GM12878 (cell line): ENCODE measurements at regions of chr9 and their contacts with region 1.

Region 1: DNA sequence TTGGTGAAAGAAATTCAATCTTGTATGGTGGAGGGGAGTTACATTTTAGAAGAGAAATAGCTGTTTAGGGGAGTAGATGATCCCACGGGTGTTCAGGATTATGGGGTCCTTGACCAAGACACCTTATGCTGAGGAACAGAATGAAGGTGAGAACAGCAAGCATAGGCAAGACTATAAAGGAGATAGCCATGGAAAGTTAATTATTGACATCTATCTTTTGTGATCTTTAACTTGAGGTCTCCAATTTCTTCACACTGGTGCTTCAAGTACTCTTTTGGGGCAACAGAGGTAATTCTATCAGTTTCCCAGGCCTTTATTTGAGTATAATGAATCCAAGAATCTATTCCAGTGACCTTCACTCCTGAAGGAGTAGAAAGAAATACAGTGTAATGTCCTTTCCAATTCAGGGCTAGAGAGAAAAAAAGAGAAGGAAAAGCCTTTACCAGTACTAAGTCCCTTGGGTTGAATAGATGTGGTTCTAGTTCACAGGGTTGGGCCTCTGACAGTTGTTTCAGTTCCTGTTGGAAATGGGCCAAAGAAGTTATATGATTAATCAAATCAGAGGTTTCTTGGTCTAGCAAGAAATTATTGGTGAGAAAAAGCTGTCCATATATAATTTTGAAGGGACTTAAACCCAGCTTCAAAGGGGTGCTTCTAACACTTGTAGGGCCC is 2104.1 kb upstream of the ACO1 start:
- DNase-seq: no peak
- ATAC-seq: peak; percentile 89
- H3K4me3 ChIP-seq: no peak overlapping the region
- H3K27ac ChIP-seq: no peak overlapping the region
- H3K4me1 ChIP-seq: no peaks in the 10 kb centered on the region
- H3K27me3 ChIP-seq: no peaks in the 10 kb centered on the region
- CTCF ChIP-seq: no peak
- EP300 ChIP-seq: no peak
- POLR2A ChIP-seq: no peak
- RAD21 ChIP-seq: no peak

Region 2: GRCh38 chr9:30120654-30121053 is 159.7 kb before region 1 on chr9:
- CTCF ChIA-PET with region 1: no interaction called
- POLR2A ChIA-PET with region 1: no interaction called
- RAD21 ChIA-PET with region 1: no interaction called
- SMC1A ChIA-PET with region 1: no interaction called
- in situ Hi-C with region 1: no loop called
- intact Hi-C with region 1: no loop called
- DNase-seq: no peak
- ATAC-seq: no peak
- H3K4me3 ChIP-seq: no peak overlapping the region
- H3K27ac ChIP-seq: no peak overlapping the region
- H3K4me1 ChIP-seq: no peaks in the 10 kb centered on the region
- H3K27me3 ChIP-seq: no peaks in the 10 kb centered on the region
- CTCF ChIP-seq: no peak
- EP300 ChIP-seq: no peak
- POLR2A ChIP-seq: no peak
- RAD21 ChIP-seq: no peak

Region 3: DNA sequence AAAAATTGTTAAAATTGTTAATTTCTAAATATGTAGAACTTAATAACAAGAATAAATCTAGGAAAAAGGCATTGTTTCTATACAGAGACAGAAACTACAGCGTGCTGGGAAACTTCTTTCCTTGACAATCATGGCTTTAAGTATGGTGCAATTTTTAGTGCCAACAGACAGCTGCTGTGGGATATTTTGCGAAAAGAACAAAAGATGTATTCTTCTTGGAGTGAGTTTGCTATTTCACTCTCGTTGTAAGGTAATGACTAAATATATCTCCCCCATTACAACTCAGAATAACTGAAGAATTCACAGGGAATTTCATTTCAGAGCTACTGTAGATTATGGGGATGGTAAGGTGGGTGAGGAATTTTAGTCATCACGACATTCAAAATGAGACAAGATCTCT is 49.1 kb after region 1 on chr9:
- CTCF ChIA-PET with region 1: no interaction called
- POLR2A ChIA-PET with region 1: no interaction called
- RAD21 ChIA-PET with region 1: no interaction called
- SMC1A ChIA-PET with region 1: no interaction called
- in situ Hi-C with region 1: loop called (anchors 10 kb)
- intact Hi-C with region 1: no loop called
- DNase-seq: no peak
- ATAC-seq: no peak
- H3K4me3 ChIP-seq: no peak overlapping the region
- H3K27ac ChIP-seq: no peak overlapping the region
- H3K4me1 ChIP-seq: no peaks in the 10 kb centered on the region
- H3K27me3 ChIP-seq: no peaks in the 10 kb centered on the region
- CTCF ChIP-seq: no peak
- EP300 ChIP-seq: no peak
- POLR2A ChIP-seq: no peak
- RAD21 ChIP-seq: no peak